ENCODE measurements at regions of chr13 and their contacts with region 1.

Region 1: DNA sequence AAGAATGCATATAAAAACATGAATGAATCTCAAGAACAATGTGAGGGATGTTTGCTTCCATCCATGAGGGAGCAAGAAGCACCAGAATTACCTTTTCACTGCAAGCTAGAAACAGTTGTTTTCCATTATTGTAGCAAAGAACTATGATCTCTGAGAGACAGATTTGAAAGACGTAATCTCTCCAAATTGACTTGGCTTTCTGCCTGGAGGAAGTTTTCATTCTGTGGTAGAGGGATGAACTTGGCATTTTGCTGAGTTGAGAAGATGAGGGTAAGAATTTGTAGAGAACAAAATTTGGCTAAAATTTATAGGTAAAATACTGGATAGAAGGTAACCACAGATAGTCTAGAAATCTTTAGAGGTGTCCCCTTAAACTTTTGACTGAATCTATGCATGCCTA is 496.8 kb downstream of the TDRD3 start:
- DNase-seq: no peak
- H3K4me3 ChIP-seq: no peak overlapping the region
- H3K27ac ChIP-seq: no peak overlapping the region
- H3K4me1 ChIP-seq: no peaks in the 10 kb centered on the region
- H3K27me3 ChIP-seq: no peaks in the 10 kb centered on the region
- CTCF ChIP-seq: no peak

Region 2: GRCh38 chr13:60520902-60521569 is 372.8 kb before region 1 on chr13:
- CTCF ChIA-PET with region 1: no interaction called
- POLR2A ChIA-PET with region 1: no interaction called
- intact Hi-C with region 1: no loop called
- DNase-seq: no peak
- H3K4me3 ChIP-seq: no peak overlapping the region
- H3K27ac ChIP-seq: no peak overlapping the region
- H3K4me1 ChIP-seq: no peaks in the 10 kb centered on the region
- H3K27me3 ChIP-seq: no peaks in the 10 kb centered on the region
- CTCF ChIP-seq: no peak

Region 3: DNA sequence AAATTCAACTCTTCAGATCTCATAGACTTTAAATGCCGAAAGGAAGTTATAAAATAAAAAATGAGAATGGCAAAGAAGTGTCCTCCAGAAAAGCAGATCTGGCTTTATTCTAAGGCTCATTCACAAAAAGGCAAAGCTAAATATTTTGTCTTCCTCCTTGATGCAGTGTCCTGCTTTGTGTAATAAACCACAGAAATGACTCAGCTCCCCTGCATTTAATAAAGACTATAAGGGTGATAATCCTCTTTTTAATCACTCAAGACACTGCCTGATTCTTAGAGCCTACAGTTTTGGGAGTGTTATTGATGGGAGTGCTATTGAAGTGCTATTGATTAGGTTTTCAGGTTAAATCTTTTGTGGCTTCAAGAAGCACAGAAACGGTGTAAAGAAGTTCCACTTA is 39.8 kb after region 1 on chr13:
- CTCF ChIA-PET with region 1: no interaction called
- POLR2A ChIA-PET with region 1: interaction called, 10 read pairs
- intact Hi-C with region 1: no loop called
- DNase-seq: no peak
- H3K4me3 ChIP-seq: no peak overlapping the region
- H3K27ac ChIP-seq: no peak overlapping the region
- H3K4me1 ChIP-seq: peaks cover 10% of the 10 kb centered on the region
- H3K27me3 ChIP-seq: no peaks in the 10 kb centered on the region
- CTCF ChIP-seq: no peak

Measured in PC-9 (cell line).